ENCODE measurements at regions of chr20 and their contacts with region 1.

Region 1: GRCh38 chr20:58236612-58237330 is 8.3 kb upstream of the ANKRD60 start:
- DNase-seq: peak; percentile 54 to 73 (median 65)
- ATAC-seq: peak; percentile 71
- H3K4me3 ChIP-seq: no peak overlapping the region
- H3K27ac ChIP-seq: no peak overlapping the region
- H3K4me1 ChIP-seq: peaks cover 6% of the 10 kb centered on the region
- H3K27me3 ChIP-seq: no peaks in the 10 kb centered on the region
- CTCF ChIP-seq: peak; percentile 79 to 92 (median 86)
- POLR2A ChIP-seq: no peak

Region 2: DNA sequence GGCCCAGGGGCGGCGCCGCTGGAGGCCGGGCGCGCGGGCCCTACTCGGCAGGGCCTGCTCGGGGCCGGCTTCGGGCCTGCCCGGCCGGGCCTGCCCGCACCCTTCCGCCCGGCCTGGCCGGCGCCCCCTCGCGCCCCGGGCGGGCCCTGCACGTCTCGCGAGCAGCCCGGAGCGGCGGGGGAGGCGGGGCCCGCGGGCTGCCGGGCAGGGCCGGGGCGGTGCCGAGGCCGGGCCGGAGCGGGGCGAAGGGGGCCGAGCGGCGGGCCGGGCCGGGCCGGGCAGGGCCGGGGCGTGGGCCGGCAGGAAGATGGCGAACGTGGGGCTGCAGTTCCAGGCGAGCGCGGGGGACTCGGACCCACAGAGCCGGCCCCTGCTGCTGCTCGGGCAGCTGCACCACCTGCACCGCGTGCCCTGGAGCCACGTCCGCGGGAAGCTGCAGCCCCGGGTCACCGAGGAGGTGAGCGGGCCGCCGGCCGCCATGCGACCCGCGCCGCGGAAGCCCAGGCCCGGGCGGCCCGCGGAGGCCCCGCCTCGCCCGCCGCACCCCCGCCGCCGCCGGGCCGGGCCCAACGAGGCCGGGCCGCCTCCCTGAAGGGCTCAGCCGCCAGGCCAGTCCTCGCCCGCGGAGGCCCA is 455.9 kb after region 1 on chr20 and contains the start of gene NPEPL1:
- intact Hi-C with region 1: loop called (anchors 10 kb)
- DNase-seq: peak; percentile 64 to 79 (median 67)
- ATAC-seq: peak; percentile 91
- H3K4me3 ChIP-seq: no peak within 1 kb of the TSS
- H3K27ac ChIP-seq: peak within 1 kb of the TSS; percentile 62 to 85 (median 72)
- H3K4me1 ChIP-seq: peaks cover 16% of the 10 kb centered on the region
- H3K27me3 ChIP-seq: no peaks in the 10 kb centered on the region
- CTCF ChIP-seq: peak in 3 of 7 experiments; percentile 36 to 76 (median 70)
- POLR2A ChIP-seq: peak in 1 of 3 donors; percentile 38
- total RNA-seq, gene NPEPL1: 31.4 to 38.2 TPM

Measured in body of pancreas (tissue), 4 donors.